Right lobe of liver (tissue), 6 donors: ENCODE measurements at regions of chr17 and their contacts with region 1.

Region 1: GRCh38 chr17:64418506-64419339 is 28.1 kb upstream of the PECAM1 start:
- DNase-seq: no peak
- ATAC-seq: peak; percentile 71 to 85 (median 75)
- H3K4me3 ChIP-seq: no peak overlapping the region
- H3K27ac ChIP-seq: no peak overlapping the region
- H3K4me1 ChIP-seq: no peaks in the 10 kb centered on the region
- H3K27me3 ChIP-seq: no peaks in the 10 kb centered on the region
- CTCF ChIP-seq: peak; percentile 70 to 84 (median 74)
- POLR2A ChIP-seq: no peak

Region 2: GRCh38 chr17:64306850-64307463 is 111.8 kb before region 1 on chr17:
- intact Hi-C with region 1: loop called in 1 of 2 experiments (anchors 5 kb)
- DNase-seq: peak in 2 of 3 donors; percentile 62 to 63
- ATAC-seq: peak; percentile 72 to 81 (median 74)
- H3K4me3 ChIP-seq: no peak overlapping the region
- H3K27ac ChIP-seq: no peak overlapping the region
- H3K4me1 ChIP-seq: peaks cover 0 to 8% (median 2%) of the 10 kb centered on the region in 4 donors
- H3K27me3 ChIP-seq: no peaks in the 10 kb centered on the region
- CTCF ChIP-seq: peak; percentile 82 to 87 (median 86)
- POLR2A ChIP-seq: no peak

Region 3: DNA sequence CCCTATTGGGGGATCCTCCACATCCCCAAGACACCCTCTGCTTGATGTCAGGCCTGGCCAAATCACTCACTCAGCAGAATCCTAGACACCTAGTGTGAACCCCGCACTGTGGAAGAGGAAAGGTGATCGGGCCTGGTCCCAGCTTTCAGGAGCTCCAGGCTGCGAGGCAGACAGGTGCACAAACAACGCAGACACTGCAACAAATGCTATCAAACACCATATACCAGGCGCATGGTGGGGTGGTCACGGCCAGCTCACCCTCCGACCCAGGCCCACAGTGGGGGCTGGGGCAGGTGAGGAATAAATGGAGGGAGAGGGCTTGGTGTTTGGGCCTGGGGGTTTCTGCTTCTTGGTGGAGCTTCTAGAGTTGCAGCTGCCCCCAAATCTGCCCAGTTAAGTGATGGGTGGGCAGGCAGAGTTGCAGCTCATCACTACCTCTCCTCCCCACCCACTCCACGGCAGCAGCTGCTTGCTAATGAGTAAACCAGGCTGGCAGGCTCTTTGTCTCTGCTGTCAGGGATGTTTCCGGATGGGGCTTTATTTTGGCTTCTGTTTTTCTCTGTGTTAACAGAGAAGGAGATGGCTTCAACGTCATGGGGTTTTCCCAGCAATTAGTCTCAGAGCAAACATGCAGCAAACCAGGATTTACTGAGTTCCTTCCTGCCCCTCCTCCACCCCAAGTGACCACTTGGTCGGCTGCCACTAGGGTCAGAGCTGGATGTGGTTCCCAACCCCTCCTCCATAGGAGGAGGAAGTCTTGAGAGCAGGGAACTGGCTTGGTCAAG is 74.7 kb before region 1 on chr17:
- intact Hi-C with region 1: no loop called
- DNase-seq: peak; percentile 77 to 85 (median 81)
- ATAC-seq: peak; percentile 77 to 87 (median 78)
- H3K4me3 ChIP-seq: no peak overlapping the region
- H3K27ac ChIP-seq: peak overlapping the region in 2 of 3 donors; percentile 47 to 66
- H3K4me1 ChIP-seq: peaks cover 0 to 15% (median 2%) of the 10 kb centered on the region in 4 donors
- H3K27me3 ChIP-seq: no peaks in the 10 kb centered on the region
- CTCF ChIP-seq: no peak
- POLR2A ChIP-seq: no peak

Region 4: GRCh38 chr17:64591944-64592343 is 173.2 kb after region 1 on chr17:
- intact Hi-C with region 1: no loop called
- DNase-seq: no peak
- ATAC-seq: no peak
- H3K4me3 ChIP-seq: no peak overlapping the region
- H3K27ac ChIP-seq: no peak overlapping the region
- H3K4me1 ChIP-seq: no peaks in the 10 kb centered on the region
- H3K27me3 ChIP-seq: no peaks in the 10 kb centered on the region
- CTCF ChIP-seq: no peak
- POLR2A ChIP-seq: no peak